ENCODE measurements at regions of chr6 and their contacts with region 1.

Region 1: DNA sequence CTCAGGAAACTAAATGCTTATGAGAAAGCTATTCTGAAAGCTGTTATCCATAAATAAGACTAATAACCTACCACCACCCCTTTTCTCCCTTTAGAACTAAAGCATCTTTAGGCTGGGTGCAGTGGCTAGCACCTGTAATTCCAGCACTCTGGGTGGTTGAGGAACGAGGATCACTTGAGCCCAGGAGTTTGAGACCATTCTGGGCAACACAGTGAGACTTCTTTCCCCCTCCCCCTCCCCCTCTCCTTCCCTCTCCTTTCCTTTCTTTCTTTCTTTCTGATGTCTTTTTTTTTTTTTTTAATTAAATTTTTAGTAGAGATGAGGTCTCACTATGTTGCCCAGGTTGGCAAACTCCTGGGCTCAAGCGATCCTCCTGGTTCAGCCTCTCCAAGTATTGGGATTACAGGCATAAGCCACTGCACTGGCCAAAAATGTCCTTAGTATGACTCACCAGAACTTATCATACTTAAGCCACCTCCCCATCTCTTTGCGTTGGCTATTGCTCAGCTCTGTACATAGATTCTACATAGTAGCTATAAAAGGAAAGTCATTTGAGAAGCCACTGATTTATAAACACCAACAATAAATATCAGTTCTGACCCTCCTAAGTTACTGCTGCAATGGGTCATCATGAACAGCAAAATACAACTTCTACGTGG is 54.8 kb upstream of the SPDEF start:
- DNase-seq: no peak
- H3K4me3 ChIP-seq: no peak overlapping the region
- H3K4me3 Mint-ChIP-seq: no peak overlapping the region
- H3K27ac Mint-ChIP-seq: peak overlapping the region; percentile 89
- H3K4me1 ChIP-seq: peaks cover 35% of the 10 kb centered on the region
- H3K4me1 Mint-ChIP-seq: peaks cover 9% of the 10 kb centered on the region
- H3K27me3 ChIP-seq: no peaks in the 10 kb centered on the region
- H3K27me3 Mint-ChIP-seq: no peaks in the 10 kb centered on the region
- CTCF ChIP-seq: no peak

Region 2: DNA sequence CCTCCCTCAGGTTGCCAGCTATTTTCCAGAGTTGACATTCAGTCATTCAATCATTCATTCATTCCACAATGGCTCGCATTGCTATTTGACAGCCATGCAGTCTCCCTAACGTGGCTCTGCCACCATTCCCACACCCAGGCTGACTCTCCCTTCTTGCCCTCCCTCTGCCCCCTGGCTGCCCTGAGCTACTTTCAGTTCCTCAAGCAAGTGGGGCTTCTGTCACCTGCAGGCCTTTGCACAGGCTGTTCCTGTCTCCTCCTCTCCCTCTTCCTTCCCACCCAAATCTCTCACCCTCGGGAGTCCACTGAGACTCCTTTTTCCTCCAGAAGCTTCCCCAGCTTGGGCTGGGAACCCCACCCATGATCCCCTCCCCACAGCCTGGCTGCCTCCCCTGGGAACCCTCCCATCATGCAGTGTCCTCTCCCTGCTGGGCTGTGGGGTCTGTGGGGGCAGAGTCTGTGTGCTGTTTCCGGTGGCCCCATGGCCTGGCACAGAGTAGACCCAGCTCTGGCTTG is 142.5 kb before region 1 on chr6:
- CTCF ChIA-PET with region 1: no interaction called
- POLR2A ChIA-PET with region 1: no interaction called
- intact Hi-C with region 1: no loop called
- DNase-seq: no peak
- H3K4me3 ChIP-seq: no peak overlapping the region
- H3K4me3 Mint-ChIP-seq: no peak overlapping the region
- H3K27ac Mint-ChIP-seq: no peak overlapping the region
- H3K4me1 ChIP-seq: peaks cover 9% of the 10 kb centered on the region
- H3K4me1 Mint-ChIP-seq: no peaks in the 10 kb centered on the region
- H3K27me3 ChIP-seq: no peaks in the 10 kb centered on the region
- H3K27me3 Mint-ChIP-seq: no peaks in the 10 kb centered on the region
- CTCF ChIP-seq: no peak

Region 3: DNA sequence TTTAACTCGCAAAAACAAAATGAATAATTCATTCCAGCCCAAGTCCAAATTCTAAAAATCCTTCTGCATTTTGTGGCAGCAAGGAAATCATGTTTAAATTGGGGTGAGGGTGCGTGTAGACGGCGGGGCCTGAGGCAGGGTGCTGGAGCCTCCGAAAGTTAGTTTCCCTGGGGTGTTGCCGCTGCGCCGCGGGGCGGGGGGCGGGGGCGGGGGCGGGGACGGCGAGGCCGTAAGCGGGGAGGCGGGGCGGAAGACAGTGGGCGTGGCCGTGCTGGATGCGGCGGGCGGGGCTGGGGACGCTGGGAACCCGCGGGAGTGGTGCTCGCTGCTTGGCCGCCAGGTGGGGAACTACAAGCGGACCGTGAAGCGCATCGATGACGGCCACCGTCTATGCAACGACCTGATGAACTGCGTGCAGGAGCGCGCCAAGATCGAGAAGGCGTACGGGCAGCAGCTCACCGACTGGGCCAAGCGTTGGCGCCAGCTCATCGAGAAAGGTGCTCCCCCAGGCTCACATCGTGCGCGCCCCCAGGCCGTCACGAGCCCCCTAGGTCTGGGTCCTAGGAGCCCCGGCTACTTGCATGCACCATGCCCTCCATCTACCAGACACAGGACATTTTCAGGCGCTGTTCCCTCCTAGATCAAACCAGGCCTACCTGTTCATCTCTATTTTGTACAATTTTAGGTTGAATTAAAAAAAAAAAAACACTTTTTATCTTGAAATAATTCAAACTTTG is 83.8 kb before region 1 on chr6:
- CTCF ChIA-PET with region 1: interaction called, 8 read pairs
- POLR2A ChIA-PET with region 1: no interaction called
- intact Hi-C with region 1: loop called (anchors 1 kb)
- DNase-seq: peak; percentile 93 to 95
- H3K4me3 ChIP-seq: peak overlapping the region; percentile 37
- H3K4me3 Mint-ChIP-seq: peak overlapping the region; percentile 57
- H3K27ac Mint-ChIP-seq: no peak overlapping the region
- H3K4me1 ChIP-seq: peaks cover 12% of the 10 kb centered on the region; the same call in 1 of the 2 replicates
- H3K4me1 Mint-ChIP-seq: no peaks in the 10 kb centered on the region
- H3K27me3 ChIP-seq: no peaks in the 10 kb centered on the region
- H3K27me3 Mint-ChIP-seq: no peaks in the 10 kb centered on the region
- CTCF ChIP-seq: peak; percentile 68 to 71

Region 4: GRCh38 chr6:34595332-34596184 is 15.4 kb before region 1 on chr6:
- CTCF ChIA-PET with region 1: interaction called, 17 read pairs
- POLR2A ChIA-PET with region 1: no interaction called
- intact Hi-C with region 1: loop called (anchors 1 kb)
- DNase-seq: no peak
- H3K4me3 ChIP-seq: no peak overlapping the region
- H3K4me3 Mint-ChIP-seq: no peak overlapping the region
- H3K27ac Mint-ChIP-seq: no peak overlapping the region
- H3K4me1 ChIP-seq: peaks cover 61% of the 10 kb centered on the region
- H3K4me1 Mint-ChIP-seq: peaks cover 36% of the 10 kb centered on the region
- H3K27me3 ChIP-seq: no peaks in the 10 kb centered on the region
- H3K27me3 Mint-ChIP-seq: no peaks in the 10 kb centered on the region
- CTCF ChIP-seq: no peak

Region 5: DNA sequence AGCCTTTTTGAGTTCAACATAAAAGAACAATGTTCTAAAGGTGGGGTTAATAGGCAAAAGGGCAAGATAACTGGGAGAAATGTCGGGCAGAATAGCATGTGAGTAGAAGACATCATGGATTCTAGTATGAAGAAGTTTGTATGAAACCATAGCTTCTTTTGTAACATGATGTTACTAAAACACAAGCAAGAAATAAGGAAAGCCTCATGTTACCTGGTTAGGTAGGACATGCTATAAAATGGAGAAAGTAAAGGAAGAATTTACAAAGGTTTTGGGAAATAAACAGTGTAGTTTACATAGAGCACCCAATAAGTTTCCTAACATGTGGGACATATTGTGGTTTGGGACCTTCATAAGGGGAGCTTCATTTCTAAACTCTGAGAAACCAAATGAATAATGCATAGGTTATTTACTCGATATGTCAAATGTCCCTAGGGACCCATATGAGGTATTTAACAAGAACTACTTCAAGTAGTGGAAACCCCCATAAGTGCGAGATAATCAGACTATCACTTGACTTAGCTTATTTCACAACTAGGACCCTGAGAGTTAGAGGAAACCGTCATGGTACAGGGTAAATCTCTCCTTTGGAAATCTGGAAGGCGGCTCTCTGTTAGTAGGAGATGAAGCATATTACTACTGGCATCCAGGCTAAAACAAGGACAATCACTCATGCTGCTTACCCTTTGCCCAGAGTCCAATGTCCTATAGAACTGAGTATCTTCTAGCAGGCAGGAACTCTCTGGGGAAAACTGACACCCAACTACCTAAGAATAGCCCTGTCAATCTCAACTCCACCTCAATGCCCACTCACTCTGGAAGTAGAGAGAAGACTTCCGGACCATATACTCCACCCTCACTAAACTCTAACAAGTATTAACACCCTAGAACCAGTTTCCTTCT is 28.1 kb after region 1 on chr6:
- CTCF ChIA-PET with region 1: no interaction called
- POLR2A ChIA-PET with region 1: no interaction called
- intact Hi-C with region 1: no loop called
- DNase-seq: no peak
- H3K4me3 ChIP-seq: no peak overlapping the region
- H3K4me3 Mint-ChIP-seq: no peak overlapping the region
- H3K27ac Mint-ChIP-seq: no peak overlapping the region
- H3K4me1 ChIP-seq: peaks cover 12% of the 10 kb centered on the region
- H3K4me1 Mint-ChIP-seq: no peaks in the 10 kb centered on the region
- H3K27me3 ChIP-seq: no peaks in the 10 kb centered on the region
- H3K27me3 Mint-ChIP-seq: no peaks in the 10 kb centered on the region
- CTCF ChIP-seq: no peak

Region 6: GRCh38 chr6:34680802-34681515 is 70.0 kb after region 1 on chr6:
- CTCF ChIA-PET with region 1: no interaction called
- POLR2A ChIA-PET with region 1: no interaction called
- intact Hi-C with region 1: no loop called
- DNase-seq: no peak
- H3K4me3 ChIP-seq: no peak overlapping the region
- H3K4me3 Mint-ChIP-seq: no peak overlapping the region
- H3K27ac Mint-ChIP-seq: no peak overlapping the region
- H3K4me1 ChIP-seq: peaks cover 23% of the 10 kb centered on the region
- H3K4me1 Mint-ChIP-seq: peaks cover 20% of the 10 kb centered on the region
- H3K27me3 ChIP-seq: no peaks in the 10 kb centered on the region
- H3K27me3 Mint-ChIP-seq: no peaks in the 10 kb centered on the region
- CTCF ChIP-seq: no peak